Right ventricle myocardium inferior (tissue), 1 donor: ENCODE measurements at regions of chr1 and their contacts with region 1.

Region 1: GRCh38 chr1:230268366-230269170 is 157.6 kb downstream of the PGBD5 start:
- DNase-seq: peak; percentile 55
- ATAC-seq: peak; percentile 61

Region 2: DNA sequence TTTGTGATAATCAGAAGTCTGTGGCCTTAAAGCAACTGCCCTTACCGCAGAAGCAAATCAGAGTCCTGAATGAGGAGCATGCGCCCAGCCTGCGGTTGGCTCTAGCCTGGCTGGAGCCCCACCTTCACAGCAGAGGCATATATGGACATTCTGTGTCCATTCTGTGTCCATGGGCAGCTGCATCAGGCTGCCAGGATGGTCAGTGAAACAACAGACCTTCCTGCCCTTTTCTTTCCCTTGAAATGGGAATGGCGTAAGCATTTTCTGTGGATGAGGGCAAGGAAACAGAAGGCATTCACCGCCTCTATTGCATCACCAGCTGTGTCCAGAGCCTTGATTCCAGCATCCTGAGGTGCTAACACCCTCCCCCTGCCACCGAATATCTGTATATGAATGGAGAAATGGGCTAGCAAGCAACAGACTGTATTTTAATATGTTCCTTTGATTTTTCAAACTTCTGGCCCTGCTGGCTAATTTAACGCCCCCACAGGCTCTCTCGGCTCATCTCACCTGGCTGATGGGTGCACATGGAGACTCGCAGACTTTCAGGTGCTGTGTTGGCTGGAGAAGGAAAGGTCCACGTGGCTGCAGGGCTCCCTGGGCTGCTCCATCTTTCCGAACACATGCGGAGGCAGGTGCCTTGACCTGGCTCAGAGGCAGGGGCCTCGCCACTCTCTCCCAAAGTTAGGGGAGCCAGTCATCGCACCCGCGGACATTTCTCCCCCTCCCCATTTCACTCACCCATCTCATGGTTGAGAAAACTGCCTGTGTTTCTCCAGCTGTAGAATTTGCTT is 42.4 kb before region 1 on chr1:
- intact Hi-C with region 1: loop called (anchors 5 kb)
- DNase-seq: no peak
- ATAC-seq: no peak